WTC11 (cell line): ENCODE measurements at regions of chr4 and their contacts with region 1.

Region 1: DNA sequence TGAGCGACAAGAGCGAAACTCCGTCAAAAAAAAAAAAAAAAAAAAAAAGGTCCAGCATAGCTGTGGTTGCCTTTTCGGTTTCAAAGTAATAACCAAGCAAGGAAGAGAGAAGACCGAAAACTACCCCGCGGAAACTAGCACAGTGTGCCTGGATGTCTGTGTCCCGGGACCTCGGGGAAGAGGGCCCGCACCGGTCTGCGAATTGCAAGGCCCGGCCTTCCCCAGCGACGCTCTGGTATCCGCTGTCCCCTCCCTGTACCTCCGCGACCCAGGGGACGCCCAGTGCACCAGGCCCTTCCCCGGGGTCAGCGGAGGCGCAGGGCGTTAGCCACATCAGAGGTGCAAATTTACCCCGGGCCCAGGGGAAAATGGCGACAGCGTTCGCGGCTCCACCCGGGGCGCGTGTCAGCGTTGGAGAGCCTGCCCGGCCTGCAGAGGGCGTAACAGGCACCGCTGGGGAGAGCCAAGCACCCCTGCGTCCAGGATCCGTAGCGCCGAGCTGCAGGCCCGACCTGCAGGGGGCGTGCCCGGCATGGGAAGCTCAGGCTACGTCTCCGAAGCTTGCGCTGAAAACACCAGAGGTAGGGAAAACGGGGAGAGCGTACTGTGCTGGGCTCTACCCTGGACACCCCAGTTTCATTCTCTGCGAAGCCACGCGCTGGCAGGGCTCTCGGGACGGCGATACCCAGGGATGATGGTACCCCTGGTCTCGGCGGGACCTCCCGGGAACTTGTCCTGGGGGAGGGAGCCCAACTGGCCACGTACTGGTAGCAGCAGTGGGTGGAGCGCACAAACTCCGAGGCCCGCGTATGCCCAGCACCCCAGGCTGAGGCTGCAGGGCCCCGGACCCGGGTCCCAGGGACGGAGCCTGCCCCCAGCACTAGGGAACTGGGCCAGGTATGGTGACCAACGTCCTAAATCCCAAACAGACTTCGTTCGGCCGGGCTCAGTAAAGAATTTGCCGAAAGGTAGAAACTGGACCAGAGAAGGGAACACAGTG is 16.2 kb downstream of the NKX6-1 start:
- DNase-seq: peak; percentile 96
- ATAC-seq: peak; percentile 78
- H3K4me3 Mint-ChIP-seq: peak overlapping the region; percentile 79
- H3K27ac Mint-ChIP-seq: no peak overlapping the region
- H3K4me1 Mint-ChIP-seq: peaks cover 38% of the 10 kb centered on the region
- H3K27me3 Mint-ChIP-seq: peaks cover 100% of the 10 kb centered on the region
- CTCF ChIP-seq: peak; percentile 95

Region 2: GRCh38 chr4:84379917-84380641 is 102.8 kb before region 1 on chr4:
- CTCF ChIA-PET with region 1: interaction called, 19 read pairs
- POLR2A ChIA-PET with region 1: no interaction called
- DNase-seq: no peak
- ATAC-seq: peak; percentile 36
- H3K4me3 Mint-ChIP-seq: peak overlapping the region; percentile 12; the same call in 1 of the 2 replicates
- H3K27ac Mint-ChIP-seq: no peak overlapping the region
- H3K4me1 Mint-ChIP-seq: peaks cover 62% of the 10 kb centered on the region
- H3K27me3 Mint-ChIP-seq: peaks cover 90% of the 10 kb centered on the region
- CTCF ChIP-seq: no peak

Region 3: DNA sequence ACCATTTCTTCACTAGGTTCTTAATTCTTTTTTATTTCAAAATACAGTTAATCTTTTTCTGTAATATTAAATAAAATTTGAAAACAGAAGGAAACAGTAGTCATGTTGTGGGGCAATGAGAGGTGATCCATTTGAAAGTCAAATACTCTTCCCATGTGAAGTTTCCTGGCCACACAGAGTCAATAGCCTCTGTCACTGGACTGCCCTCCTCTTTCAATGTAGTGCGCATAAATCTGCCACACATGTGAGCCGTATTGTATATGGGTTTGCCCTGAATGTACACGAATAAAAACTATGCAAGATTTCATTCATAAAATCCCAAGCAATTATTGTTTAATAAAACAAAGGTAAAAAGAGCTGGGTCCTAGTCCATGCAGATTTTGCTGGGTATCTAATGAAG is 42.9 kb before region 1 on chr4:
- CTCF ChIA-PET with region 1: no interaction called
- POLR2A ChIA-PET with region 1: no interaction called
- DNase-seq: no peak
- ATAC-seq: no peak
- H3K4me3 Mint-ChIP-seq: no peak overlapping the region
- H3K27ac Mint-ChIP-seq: no peak overlapping the region
- H3K4me1 Mint-ChIP-seq: no peaks in the 10 kb centered on the region
- H3K27me3 Mint-ChIP-seq: no peaks in the 10 kb centered on the region; the same call in 1 of the 2 replicates
- CTCF ChIP-seq: no peak

Region 4: DNA sequence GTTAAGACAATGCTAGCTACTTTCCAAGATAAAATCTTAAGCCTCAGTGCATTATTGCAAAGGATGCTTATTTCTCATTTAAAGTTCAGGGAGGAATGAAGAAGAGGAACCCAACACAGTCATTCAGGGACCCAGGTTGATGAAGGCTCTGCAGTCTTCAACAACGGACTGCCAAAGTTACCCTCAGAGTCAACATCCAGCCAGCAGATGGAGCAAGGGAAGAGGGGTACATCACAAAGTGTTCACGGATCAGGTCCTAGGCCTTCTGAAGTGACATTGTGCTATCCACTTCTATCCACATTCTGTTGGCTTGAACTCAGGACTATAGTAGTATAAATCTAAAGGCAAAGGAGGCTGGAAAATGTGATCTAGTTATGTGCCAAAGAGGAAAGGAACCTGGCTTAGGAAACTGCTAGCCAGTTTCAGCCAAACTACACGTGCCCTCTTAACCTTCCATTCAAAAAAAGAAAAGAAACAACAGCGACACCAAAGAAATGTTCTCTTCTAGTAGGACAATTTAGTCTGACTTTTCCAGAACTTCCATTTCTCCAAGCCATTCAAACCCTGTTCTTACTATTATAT is 12.6 kb before region 1 on chr4:
- CTCF ChIA-PET with region 1: interaction called, 30 read pairs
- POLR2A ChIA-PET with region 1: no interaction called
- DNase-seq: peak; percentile 49
- ATAC-seq: peak; percentile 94
- H3K4me3 Mint-ChIP-seq: no peak overlapping the region
- H3K27ac Mint-ChIP-seq: no peak overlapping the region
- H3K4me1 Mint-ChIP-seq: peaks cover 16% of the 10 kb centered on the region
- H3K27me3 Mint-ChIP-seq: no peaks in the 10 kb centered on the region
- CTCF ChIP-seq: no peak

Region 5: GRCh38 chr4:84503495-84504437 is 20.9 kb after region 1 on chr4:
- CTCF ChIA-PET with region 1: interaction called, 242 read pairs
- POLR2A ChIA-PET with region 1: interaction called, 4 read pairs
- DNase-seq: peak; percentile 33
- ATAC-seq: peak; percentile 15
- H3K4me3 Mint-ChIP-seq: peak overlapping the region; percentile 51
- H3K27ac Mint-ChIP-seq: no peak overlapping the region
- H3K4me1 Mint-ChIP-seq: peaks cover 46% of the 10 kb centered on the region
- H3K27me3 Mint-ChIP-seq: peaks cover 68% of the 10 kb centered on the region
- CTCF ChIP-seq: peak; percentile 22

Region 6: DNA sequence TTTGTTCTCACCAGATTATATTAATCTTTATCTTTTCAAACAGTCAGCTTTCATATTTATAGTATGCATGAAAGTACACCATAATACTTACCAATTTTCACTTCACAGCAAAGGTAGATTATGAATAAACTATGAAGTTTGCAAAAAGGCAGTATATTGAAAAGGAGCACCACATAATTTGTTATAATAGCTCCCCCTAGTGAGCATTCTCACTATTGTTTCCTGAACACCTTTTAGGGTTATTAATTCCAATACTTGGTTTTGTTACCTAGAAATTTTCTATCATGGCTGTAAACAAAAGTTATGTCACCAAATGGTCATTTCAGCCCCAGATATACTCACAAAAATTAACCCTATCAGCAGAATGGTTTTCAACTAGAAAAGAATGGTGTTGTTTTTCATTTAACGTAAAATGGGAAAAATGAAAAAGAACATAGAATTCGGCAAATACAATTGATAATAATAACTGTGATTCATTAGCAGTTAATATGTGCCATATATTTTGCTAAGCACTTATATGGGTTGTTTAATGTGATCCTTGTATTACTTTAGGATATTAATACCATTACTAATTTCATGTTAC is 46.4 kb after region 1 on chr4:
- CTCF ChIA-PET with region 1: interaction called, 17 read pairs
- POLR2A ChIA-PET with region 1: no interaction called
- DNase-seq: no peak
- ATAC-seq: no peak
- H3K4me3 Mint-ChIP-seq: no peak overlapping the region
- H3K27ac Mint-ChIP-seq: no peak overlapping the region
- H3K4me1 Mint-ChIP-seq: peaks cover 7% of the 10 kb centered on the region
- H3K27me3 Mint-ChIP-seq: no peaks in the 10 kb centered on the region
- CTCF ChIP-seq: peak; percentile 63